PC-9 (cell line): ENCODE measurements at regions of chr10 and their contacts with region 1.

Region 1: DNA sequence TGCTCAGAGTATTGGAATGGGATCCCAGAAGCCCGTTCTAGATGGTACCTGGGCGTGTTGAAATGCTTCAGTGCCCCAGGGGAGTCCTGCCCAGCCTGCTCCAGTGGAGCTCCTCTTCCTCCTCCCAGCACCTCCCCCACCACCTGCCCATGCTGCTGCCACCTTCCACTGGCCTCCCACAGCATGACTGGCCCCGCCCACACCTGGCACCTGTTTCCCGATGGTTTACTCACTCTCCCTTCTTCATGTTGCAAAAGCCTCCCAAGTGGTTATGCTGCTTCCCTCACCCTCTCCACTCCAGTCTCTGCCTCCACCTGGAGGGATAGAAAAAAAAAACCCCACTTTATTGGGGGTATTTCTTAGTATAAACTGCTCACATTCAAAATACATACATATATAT is 32.2 kb upstream of the PCBD1 start:
- DNase-seq: peak; percentile 87 to 93
- H3K4me3 ChIP-seq: no peak overlapping the region
- H3K27ac ChIP-seq: no peak overlapping the region
- H3K4me1 ChIP-seq: peaks cover 27% of the 10 kb centered on the region
- H3K27me3 ChIP-seq: peaks cover 27% of the 10 kb centered on the region
- CTCF ChIP-seq: 0 out of 2 replicates have a peak, but pooled peaks have one; percentile 20

Region 2: GRCh38 chr10:72794260-72794659 is 1873.7 kb after region 1 on chr10:
- CTCF ChIA-PET with region 1: no interaction called
- POLR2A ChIA-PET with region 1: interaction called, 11 read pairs
- intact Hi-C with region 1: no loop called
- DNase-seq: no peak
- H3K4me3 ChIP-seq: no peak overlapping the region
- H3K27ac ChIP-seq: peak overlapping the region; percentile 41; the same call in 1 of the 2 replicates
- H3K4me1 ChIP-seq: peaks cover 33% of the 10 kb centered on the region
- H3K27me3 ChIP-seq: no peaks in the 10 kb centered on the region
- CTCF ChIP-seq: no peak